ENCODE measurements at regions of chr10 and their contacts with region 1.

Region 1: GRCh38 chr10:132452631-132453469 is 55.9 kb downstream of the PWWP2B start:
- DNase-seq: peak in 9 of 10 donors; percentile 55 to 95 (median 69)

Region 2: GRCh38 chr10:132387764-132388210 is 65.1 kb before region 1 on chr10:
- intact Hi-C with region 1: loop called (anchors 2 kb)
- DNase-seq: peak in 8 of 10 donors; percentile 34 to 93 (median 57)

Measured in posterior cingulate gyrus (tissue), 11 donors.